K562 (cell line): ENCODE measurements at regions of chr5 and their contacts with region 1.

Region 1: GRCh38 chr5:140261403-140262171 is 41.3 kb downstream of the PFDN1 start:
- DNase-seq: peak; percentile 72 to 86 (median 80)
- ATAC-seq: peak; percentile 98
- H3K4me3 ChIP-seq: no peak overlapping the region
- H3K27ac ChIP-seq: peak overlapping the region; percentile 74
- H3K4me1 ChIP-seq: peaks cover 3 to 9% of the 10 kb centered on the region in 2 experiments; a peak in 2 of 5 replicates
- H3K27me3 ChIP-seq: no peaks in the 10 kb centered on the region
- CTCF ChIP-seq: peak in 1 of 3 experiments; percentile 28; a peak in 2 of 6 replicates
- EP300 ChIP-seq: peak; percentile 26; the same call in 1 of the 2 replicates
- POLR2A ChIP-seq: no peak
- RAD21 ChIP-seq: peak in 1 of 2 experiments; percentile 29; a peak in 2 of 4 replicates

Region 2: GRCh38 chr5:140302786-140303639 is 41.4 kb after region 1 on chr5 and contains the start of gene PFDN1:
- CTCF ChIA-PET with region 1: no interaction called
- POLR2A ChIA-PET with region 1: interaction called, 11 read pairs
- in situ Hi-C with region 1: no loop called
- intact Hi-C with region 1: no loop called
- DNase-seq: peak; percentile 97 to 98 (median 98)
- ATAC-seq: peak; percentile 97
- H3K4me3 ChIP-seq: peak within 1 kb of the TSS; percentile 87
- H3K27ac ChIP-seq: peak within 1 kb of the TSS; percentile 91
- H3K4me1 ChIP-seq: peaks cover 4% of the 10 kb centered on the region in 2 experiments; a peak in 3 of 5 replicates
- H3K27me3 ChIP-seq: no peaks in the 10 kb centered on the region
- CTCF ChIP-seq: no peak
- EP300 ChIP-seq: no peak
- POLR2A ChIP-seq: peak; percentile 90
- RAD21 ChIP-seq: no peak
- polyA plus RNA-seq, gene PFDN1: 152 to 215 TPM

Region 3: GRCh38 chr5:141094481-141095262 is 833.1 kb after region 1 on chr5 and contains the start of gene PCDHB2:
- CTCF ChIA-PET with region 1: no interaction called
- POLR2A ChIA-PET with region 1: no interaction called
- in situ Hi-C with region 1: no loop called
- intact Hi-C with region 1: no loop called
- DNase-seq: peak; percentile 15 to 37 (median 20)
- ATAC-seq: peak; percentile 84
- H3K4me3 ChIP-seq: peak within 1 kb of the TSS; percentile 25; the same call in 1 of the 2 replicates
- H3K27ac ChIP-seq: no peak within 1 kb of the TSS
- H3K4me1 ChIP-seq: no peaks in the 10 kb centered on the region
- H3K27me3 ChIP-seq: no peaks in the 10 kb centered on the region; a peak in 1 of 5 replicates
- CTCF ChIP-seq: peak; percentile 48 to 65 (median 56)
- EP300 ChIP-seq: no peak
- POLR2A ChIP-seq: no peak
- RAD21 ChIP-seq: peak in 1 of 2 experiments; percentile 23; a peak in 1 of 4 replicates
- polyA plus RNA-seq, gene PCDHB2: not detected